Right ventricle myocardium inferior (tissue), 1 donor: ENCODE measurements at regions of chr17 and their contacts with region 1.

Region 1: GRCh38 chr17:68591583-68591982 is 9.6 kb downstream of the FAM20A start:
- DNase-seq: peak; percentile 58
- ATAC-seq: no peak

Region 2: DNA sequence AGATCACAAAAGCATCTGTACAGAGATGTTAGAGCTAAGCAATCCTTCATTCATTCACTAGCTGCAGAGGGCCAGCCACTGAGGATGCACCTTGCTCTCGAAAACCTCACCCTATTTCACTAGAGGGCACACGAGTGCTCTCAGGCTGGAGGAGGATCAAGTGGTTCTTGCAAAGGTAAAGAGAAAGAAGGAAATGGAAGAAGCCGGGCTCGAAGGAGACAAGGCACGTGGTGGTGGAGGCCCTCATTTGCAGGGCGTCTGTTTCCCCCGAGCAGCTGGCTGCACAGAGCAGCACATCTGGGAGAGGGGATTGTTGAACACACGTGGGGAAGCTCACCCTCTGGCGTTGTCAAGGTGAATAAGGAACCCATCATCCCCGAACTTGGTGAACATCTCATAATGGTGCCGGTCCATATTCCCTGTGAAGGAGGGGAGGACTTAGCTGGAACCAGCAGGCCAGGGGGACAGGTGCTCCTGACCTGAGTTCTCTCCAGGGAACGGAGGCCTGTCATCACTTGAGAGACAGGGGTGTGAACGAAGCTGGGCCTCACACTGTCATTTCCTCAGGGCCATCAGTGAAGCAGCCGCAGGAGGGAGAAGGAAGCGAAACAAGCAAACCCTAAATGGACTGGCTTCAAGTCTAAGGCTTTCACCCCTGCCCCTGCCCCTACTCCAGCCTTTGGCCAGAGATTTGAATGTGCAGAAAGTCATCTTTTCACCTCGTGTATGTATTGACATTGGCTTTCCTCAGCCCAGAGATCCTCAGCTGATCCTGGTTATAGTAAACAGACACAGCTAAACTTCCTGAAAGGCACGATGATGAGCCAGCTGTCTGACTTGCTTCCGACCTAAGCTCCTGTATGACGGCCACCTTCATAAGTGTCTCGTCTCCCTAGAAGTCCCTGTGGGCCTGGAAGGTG is 51.8 kb before region 1 on chr17:
- intact Hi-C with region 1: loop called (anchors 10 kb)
- DNase-seq: peak; percentile 68
- ATAC-seq: peak; percentile 34